H1 (cell line): ENCODE measurements at regions of chr5 and their contacts with region 1.

Region 1: GRCh38 chr5:14153932-14154731 is 11.0 kb downstream of the TRIO start:
- DNase-seq: no peak
- H3K4me3 ChIP-seq: no peak overlapping the region
- H3K27ac ChIP-seq: no peak overlapping the region
- H3K4me1 ChIP-seq: peaks cover 10 to 31% (median 20%) of the 10 kb centered on the region in 4 experiments; a peak in 6 of 7 replicates
- H3K27me3 ChIP-seq: no peaks in the 10 kb centered on the region
- CTCF ChIP-seq: no peak
- EP300 ChIP-seq: no peak
- POLR2A ChIP-seq: no peak
- RAD21 ChIP-seq: no peak

Region 2: GRCh38 chr5:14035859-14036440 is 118.2 kb before region 1 on chr5:
- CTCF ChIA-PET with region 1: no interaction called
- POLR2A ChIA-PET with region 1: no interaction called
- DNase-seq: peak in 1 of 2 experiments; percentile 74
- H3K4me3 ChIP-seq: peak overlapping the region in 3 of 4 experiments; percentile 19 to 46 (median 34); a peak in 5 of 8 replicates
- H3K27ac ChIP-seq: peak overlapping the region; percentile 22; the same call in 1 of the 2 replicates
- H3K4me1 ChIP-seq: peaks cover 18 to 29% (median 18%) of the 10 kb centered on the region in 4 experiments
- H3K27me3 ChIP-seq: peaks cover 0 to 4% (median under 1%) of the 10 kb centered on the region in 4 experiments; a peak in 2 of 7 replicates
- CTCF ChIP-seq: no peak
- EP300 ChIP-seq: peak in 1 of 2 experiments; percentile 38; a peak in 1 of 3 replicates
- POLR2A ChIP-seq: no peak; a peak in 1 of 3 replicates
- RAD21 ChIP-seq: no peak

Region 3: GRCh38 chr5:14142827-14143548 is 11.1 kb before region 1 on chr5 and contains the start of gene TRIO:
- CTCF ChIA-PET with region 1: interaction called, 9 read pairs
- POLR2A ChIA-PET with region 1: interaction called, 10 read pairs
- DNase-seq: peak; percentile 85 to 99
- H3K4me3 ChIP-seq: peak within 1 kb of the TSS; percentile 88 to 98 (median 94)
- H3K27ac ChIP-seq: peak within 1 kb of the TSS; percentile 42; the same call in 1 of the 2 replicates
- H3K4me1 ChIP-seq: peaks cover 5 to 20% (median 10%) of the 10 kb centered on the region in 4 experiments; a peak in 6 of 7 replicates
- H3K27me3 ChIP-seq: peaks cover 0 to 2% (median 0%) of the 10 kb centered on the region in 4 experiments; a peak in 1 of 7 replicates
- CTCF ChIP-seq: peak; percentile 46 to 70 (median 54)
- EP300 ChIP-seq: no peak
- POLR2A ChIP-seq: peak; percentile 37 to 63
- RAD21 ChIP-seq: peak; percentile 42 to 57; a peak in 3 of 4 replicates
- total RNA-seq, gene TRIO: 69.1 and 70.4 TPM in 2 replicates

Region 4: DNA sequence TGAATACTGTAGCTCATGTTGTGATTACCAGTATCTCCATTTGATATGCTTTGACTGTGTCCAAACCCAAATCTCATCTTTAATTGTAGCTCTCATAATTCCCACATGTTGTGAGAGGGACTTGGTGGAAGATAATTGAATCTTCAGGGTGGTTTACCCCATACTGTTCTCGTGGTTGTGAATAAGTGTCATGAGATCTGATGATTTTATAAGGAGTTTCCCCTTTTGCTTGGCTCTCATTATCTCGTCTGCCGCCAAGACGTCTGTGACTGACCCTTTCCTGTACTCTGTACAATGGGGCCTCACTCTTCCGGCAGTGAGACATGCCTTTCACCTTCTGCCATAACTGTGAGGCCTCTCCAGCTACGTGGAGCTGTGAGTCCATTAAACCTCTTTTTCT is 48.3 kb after region 1 on chr5:
- CTCF ChIA-PET with region 1: no interaction called
- POLR2A ChIA-PET with region 1: no interaction called
- DNase-seq: no peak
- H3K4me3 ChIP-seq: no peak overlapping the region
- H3K27ac ChIP-seq: no peak overlapping the region
- H3K4me1 ChIP-seq: peaks cover 0 to 10% (median 3%) of the 10 kb centered on the region in 4 experiments; a peak in 4 of 7 replicates
- H3K27me3 ChIP-seq: no peaks in the 10 kb centered on the region
- CTCF ChIP-seq: no peak
- EP300 ChIP-seq: no peak
- POLR2A ChIP-seq: no peak
- RAD21 ChIP-seq: no peak